GM18951 (cell line): ENCODE measurements at regions of chr12 and their contacts with region 1.

Region 1: GRCh38 chr12:27424631-27425230 is 21.8 kb upstream of the SMCO2 start:
- POLR2A ChIP-seq: no peak

Region 2: DNA sequence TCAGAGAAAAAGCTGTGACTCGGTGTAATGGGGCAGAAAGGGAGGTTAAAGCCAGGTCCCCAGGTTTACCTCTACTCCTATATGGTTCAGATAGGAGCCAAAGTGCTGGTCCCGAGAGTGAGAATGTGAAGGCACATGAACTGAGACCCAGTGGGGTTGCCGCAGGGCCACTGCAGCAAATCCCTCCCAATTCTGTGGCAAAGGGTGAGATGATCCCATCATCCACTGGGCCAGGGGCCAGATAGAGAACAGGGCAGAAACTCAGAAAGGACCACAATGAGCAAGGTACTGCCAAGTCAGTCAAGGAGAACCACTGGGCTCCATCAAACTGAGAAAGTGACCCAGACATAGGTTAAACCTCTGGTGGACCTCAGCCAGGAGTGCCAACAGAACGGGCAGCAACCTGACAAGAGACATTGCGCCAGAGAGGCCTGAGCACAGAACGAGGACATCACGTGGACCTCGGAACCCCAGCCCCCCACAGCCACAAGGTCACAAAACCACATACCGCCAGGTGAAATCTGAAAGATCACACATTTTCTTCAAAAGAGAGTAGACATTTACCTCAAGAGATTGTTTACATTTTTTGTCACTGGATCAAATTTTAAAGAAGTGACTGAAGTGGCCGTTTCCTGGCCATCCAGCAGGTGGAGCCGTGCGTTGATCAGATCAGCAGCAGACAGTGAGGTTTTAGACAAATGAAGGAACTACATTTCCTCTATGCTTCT is 571.3 kb before region 1 on chr12:
- in situ Hi-C with region 1: no loop called
- POLR2A ChIP-seq: no peak

Region 3: DNA sequence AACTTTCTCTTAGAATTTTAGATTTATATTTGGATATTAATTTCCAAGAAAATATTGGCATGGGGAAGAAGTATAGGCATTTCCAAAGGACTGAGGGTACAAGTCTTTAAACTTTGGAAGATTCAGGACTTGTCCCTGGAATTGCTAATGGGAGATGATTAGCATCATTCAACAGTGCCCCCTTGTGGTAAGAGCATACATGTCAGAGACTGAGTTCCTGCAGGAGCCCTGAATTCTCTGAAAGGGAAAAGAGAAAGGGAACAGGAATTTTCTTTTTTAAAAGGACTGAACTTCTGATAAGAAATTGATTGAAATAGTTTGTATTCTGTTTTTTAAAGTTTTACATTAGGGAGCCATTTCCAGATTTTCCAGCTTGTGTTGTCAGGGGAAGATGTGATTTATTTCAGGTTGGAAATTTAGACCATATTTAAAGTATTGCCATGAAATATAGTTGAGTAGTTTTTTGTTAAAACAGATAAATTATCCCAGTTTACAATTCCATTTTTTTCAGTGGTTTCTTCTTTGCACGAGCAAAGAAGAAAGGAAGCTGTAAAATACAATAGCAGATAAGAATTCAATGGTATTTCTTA is 227.5 kb after region 1 on chr12:
- in situ Hi-C with region 1: loop called (anchors 10 kb)
- POLR2A ChIP-seq: no peak